ENCODE measurements at regions of chr7 and their contacts with region 1.

Region 1: GRCh38 chr7:130904031-130904757 is 170.2 kb upstream of the KLF14 start:
- DNase-seq: peak; percentile 96
- H3K4me3 ChIP-seq: peak overlapping the region in 1 of 3 experiments; percentile 18
- H3K27ac ChIP-seq: peak overlapping the region; percentile 96
- H3K4me1 ChIP-seq: peaks cover 84% of the 10 kb centered on the region
- H3K27me3 ChIP-seq: no peaks in the 10 kb centered on the region
- CTCF ChIP-seq: no peak
- POLR2A ChIP-seq: no peak

Region 2: GRCh38 chr7:130887182-130888016 is 16.8 kb before region 1 on chr7:
- CTCF ChIA-PET with region 1: interaction called, 79 read pairs
- POLR2A ChIA-PET with region 1: interaction called, 3 read pairs
- dilution Hi-C with region 1: no loop called
- intact Hi-C with region 1: loop called (anchors 1 kb)
- DNase-seq: peak; percentile 89
- H3K4me3 ChIP-seq: no peak overlapping the region
- H3K27ac ChIP-seq: peak overlapping the region; percentile 98
- H3K4me1 ChIP-seq: peaks cover 74% of the 10 kb centered on the region
- H3K27me3 ChIP-seq: no peaks in the 10 kb centered on the region
- CTCF ChIP-seq: no peak
- POLR2A ChIP-seq: peak; percentile 72

Region 3: DNA sequence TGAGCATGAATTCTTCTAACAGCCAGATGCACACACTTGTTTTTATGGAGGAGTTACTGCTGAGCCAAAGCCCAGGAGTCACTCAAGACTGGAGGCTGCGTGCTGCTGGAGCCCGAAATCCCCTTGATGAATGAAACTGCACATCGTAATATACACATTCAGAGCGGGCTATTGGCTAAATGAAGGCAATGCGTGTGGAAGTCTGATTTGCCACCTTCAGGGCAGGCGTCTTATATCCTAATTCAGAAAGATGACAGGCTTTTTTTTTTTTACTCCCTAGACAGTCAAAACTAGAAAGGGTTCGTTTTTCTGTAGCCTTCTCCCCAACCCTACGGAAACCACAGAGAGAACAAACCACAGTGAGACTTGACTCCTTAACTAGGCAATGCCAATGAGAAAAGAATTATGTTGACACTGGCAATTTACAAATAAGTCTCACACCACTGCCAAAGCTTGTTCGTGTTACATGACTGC is 57.0 kb after region 1 on chr7:
- CTCF ChIA-PET with region 1: interaction called, 12 read pairs
- POLR2A ChIA-PET with region 1: no interaction called
- dilution Hi-C with region 1: no loop called
- intact Hi-C with region 1: no loop called
- DNase-seq: no peak
- H3K4me3 ChIP-seq: no peak overlapping the region
- H3K27ac ChIP-seq: peak overlapping the region; percentile 42
- H3K4me1 ChIP-seq: peaks cover 21% of the 10 kb centered on the region
- H3K27me3 ChIP-seq: no peaks in the 10 kb centered on the region
- CTCF ChIP-seq: no peak
- POLR2A ChIP-seq: no peak

Region 4: DNA sequence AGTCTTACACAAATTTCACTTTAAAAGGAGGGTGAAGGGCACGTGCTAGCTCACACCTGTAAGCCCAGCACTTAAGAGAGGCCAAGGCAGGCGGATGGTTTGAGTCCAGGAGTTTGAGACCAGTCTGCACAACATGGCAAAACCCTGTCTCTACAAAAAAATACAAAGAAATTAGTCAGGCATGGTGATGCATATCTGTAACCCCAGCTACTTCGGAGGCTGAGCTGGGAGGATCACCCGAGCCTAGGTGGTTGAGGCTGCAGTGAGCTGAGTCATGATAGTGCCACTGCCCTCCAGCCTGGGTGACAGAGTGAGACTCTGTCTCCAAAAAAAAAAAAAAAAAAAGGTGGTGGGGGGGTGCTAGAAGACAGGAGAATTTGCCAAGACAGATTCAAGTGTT is 67.1 kb after region 1 on chr7:
- CTCF ChIA-PET with region 1: no interaction called
- POLR2A ChIA-PET with region 1: no interaction called
- dilution Hi-C with region 1: no loop called
- intact Hi-C with region 1: no loop called
- DNase-seq: no peak
- H3K4me3 ChIP-seq: no peak overlapping the region
- H3K27ac ChIP-seq: no peak overlapping the region
- H3K4me1 ChIP-seq: no peaks in the 10 kb centered on the region
- H3K27me3 ChIP-seq: no peaks in the 10 kb centered on the region
- CTCF ChIP-seq: no peak
- POLR2A ChIP-seq: no peak

Region 5: DNA sequence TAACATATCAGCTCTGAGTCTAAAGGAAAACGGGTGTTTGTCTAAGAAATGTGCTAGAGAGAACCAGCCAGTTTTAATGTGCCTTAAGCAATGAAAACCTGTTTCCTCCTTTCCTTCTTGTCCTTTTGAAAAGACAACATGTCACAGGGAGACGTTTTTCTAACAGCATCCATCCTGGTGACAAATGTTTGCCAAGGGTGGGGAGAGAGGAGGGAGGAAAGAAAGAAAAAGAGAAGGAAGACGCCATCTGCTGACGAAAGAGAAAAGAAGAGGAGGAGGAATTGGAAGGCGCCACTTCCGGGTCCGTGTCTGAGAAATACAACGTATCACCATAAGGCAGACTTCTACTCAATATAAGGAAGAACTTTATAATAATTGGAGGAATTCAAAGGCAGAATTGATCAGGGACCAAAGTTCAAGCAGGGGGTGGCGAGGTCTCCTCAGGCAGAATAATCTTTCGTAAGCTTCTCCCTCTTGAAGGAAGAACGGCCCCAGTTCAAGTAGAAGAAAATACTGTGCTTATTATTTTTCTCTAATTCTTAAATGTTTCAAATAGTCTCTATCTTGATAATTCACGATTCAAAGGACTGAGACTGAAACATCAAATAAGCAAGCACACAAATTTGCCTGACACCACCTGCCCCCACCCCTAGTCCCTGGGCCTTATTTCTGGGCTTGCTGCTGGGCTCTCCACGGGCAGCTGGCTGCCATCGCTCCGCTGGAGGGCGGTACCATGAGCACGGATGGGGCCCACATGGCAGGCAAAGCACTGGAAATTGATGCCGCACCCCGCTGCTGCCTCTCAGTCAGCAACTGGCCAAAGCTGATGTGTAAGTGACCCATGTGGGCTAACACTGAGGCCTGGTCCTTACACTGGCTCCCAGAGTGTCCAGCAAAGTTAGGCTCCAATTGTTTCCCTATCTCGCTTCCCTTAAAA is 103.5 kb after region 1 on chr7:
- CTCF ChIA-PET with region 1: interaction called, 12 read pairs
- POLR2A ChIA-PET with region 1: no interaction called
- dilution Hi-C with region 1: no loop called
- intact Hi-C with region 1: loop called (anchors 2 kb)
- DNase-seq: peak; percentile 71
- H3K4me3 ChIP-seq: no peak overlapping the region
- H3K27ac ChIP-seq: peak overlapping the region; percentile 24
- H3K4me1 ChIP-seq: peaks cover 6% of the 10 kb centered on the region
- H3K27me3 ChIP-seq: no peaks in the 10 kb centered on the region
- CTCF ChIP-seq: peak; percentile 47 to 49
- POLR2A ChIP-seq: no peak

Region 6: GRCh38 chr7:131071786-131072504 is 167.8 kb after region 1 on chr7:
- CTCF ChIA-PET with region 1: no interaction called
- POLR2A ChIA-PET with region 1: no interaction called
- dilution Hi-C with region 1: no loop called
- intact Hi-C with region 1: no loop called
- DNase-seq: peak; percentile 96
- H3K4me3 ChIP-seq: peak overlapping the region in 1 of 3 experiments; percentile 51
- H3K27ac ChIP-seq: peak overlapping the region; percentile 88
- H3K4me1 ChIP-seq: peaks cover 17% of the 10 kb centered on the region
- H3K27me3 ChIP-seq: no peaks in the 10 kb centered on the region
- CTCF ChIP-seq: peak; percentile 11 to 16
- POLR2A ChIP-seq: no peak

Region 7: GRCh38 chr7:131355921-131356777 is 452.0 kb after region 1 on chr7:
- CTCF ChIA-PET with region 1: no interaction called
- POLR2A ChIA-PET with region 1: no interaction called
- dilution Hi-C with region 1: no loop called
- intact Hi-C with region 1: no loop called
- DNase-seq: no peak
- H3K4me3 ChIP-seq: no peak overlapping the region
- H3K27ac ChIP-seq: no peak overlapping the region
- H3K4me1 ChIP-seq: peaks cover 19% of the 10 kb centered on the region
- H3K27me3 ChIP-seq: no peaks in the 10 kb centered on the region
- CTCF ChIP-seq: no peak
- POLR2A ChIP-seq: no peak

Measured in endothelial cell of umbilical vein (primary cell).